ENCODE measurements at regions of chr3 and their contacts with region 1.

Region 1: DNA sequence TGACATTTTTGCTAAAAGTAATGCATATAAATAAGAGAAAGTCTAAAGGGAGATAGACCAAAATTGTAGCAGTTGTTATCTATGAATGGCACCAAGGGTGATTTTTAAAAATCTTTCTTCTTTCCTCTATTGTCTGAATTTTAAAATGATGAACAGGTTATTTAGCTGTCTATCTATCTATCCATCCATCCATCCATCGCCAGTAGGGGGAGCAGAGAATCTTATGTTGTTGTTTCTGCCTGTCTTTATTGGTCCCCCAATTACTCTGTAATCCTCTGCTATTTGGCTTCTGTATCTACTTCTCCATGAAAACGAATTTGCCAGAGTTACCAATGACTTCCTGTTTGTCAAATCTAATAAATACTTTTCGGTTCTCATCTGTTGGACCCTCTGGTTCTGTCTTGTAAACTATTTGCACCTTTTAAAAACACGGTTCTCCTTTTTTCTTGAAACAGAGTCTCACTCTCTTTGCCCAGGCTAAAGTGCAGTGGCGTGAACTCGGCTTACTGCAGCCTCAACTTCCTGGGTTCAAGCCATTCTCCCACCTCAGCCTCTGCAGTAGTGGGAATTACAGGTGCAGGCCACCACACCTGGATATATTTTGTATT is 86.0 kb downstream of the ECT2 start:
- DNase-seq: peak; percentile 23 to 76 (median 30)
- ATAC-seq: peak; percentile 89
- H3K4me3 ChIP-seq: no peak overlapping the region
- H3K27ac ChIP-seq: no peak overlapping the region
- H3K4me1 ChIP-seq: peaks cover 0 to 4% of the 10 kb centered on the region in 2 experiments; a peak in 1 of 5 replicates
- H3K27me3 ChIP-seq: no peaks in the 10 kb centered on the region
- CTCF ChIP-seq: peak; percentile 37 to 73 (median 65); a peak in 5 of 6 replicates
- EP300 ChIP-seq: no peak
- POLR2A ChIP-seq: no peak
- RAD21 ChIP-seq: peak; percentile 76 to 89

Region 2: DNA sequence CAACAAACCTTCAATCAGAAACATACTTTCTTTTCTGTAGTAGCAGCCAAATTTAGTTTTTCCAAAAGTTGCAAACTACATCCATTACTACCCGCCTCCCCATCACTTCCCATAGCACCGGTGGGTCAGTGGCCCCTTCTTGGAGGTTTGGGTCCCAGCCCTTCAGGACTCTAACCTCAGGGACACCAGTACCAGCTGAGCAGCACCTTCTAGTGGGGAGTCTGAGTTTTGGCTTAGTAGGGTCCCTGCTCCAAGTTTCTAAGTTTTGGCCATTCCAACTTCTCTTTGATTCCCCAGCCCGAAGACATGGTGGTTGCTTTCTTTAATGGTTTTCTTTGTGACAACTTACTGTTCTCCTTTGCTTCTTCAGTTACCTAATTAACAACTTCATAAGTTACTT is 74.6 kb after region 1 on chr3:
- CTCF ChIA-PET with region 1: no interaction called
- POLR2A ChIA-PET with region 1: no interaction called
- in situ Hi-C with region 1: no loop called
- intact Hi-C with region 1: loop called (anchors 5 kb)
- DNase-seq: peak in 1 of 4 experiments; percentile 13
- ATAC-seq: peak; percentile 75
- H3K4me3 ChIP-seq: no peak overlapping the region
- H3K27ac ChIP-seq: no peak overlapping the region
- H3K4me1 ChIP-seq: no peaks in the 10 kb centered on the region; a peak in 1 of 5 replicates
- H3K27me3 ChIP-seq: no peaks in the 10 kb centered on the region
- CTCF ChIP-seq: peak in 2 of 3 experiments; percentile 38 to 43; a peak in 3 of 6 replicates
- EP300 ChIP-seq: no peak
- POLR2A ChIP-seq: no peak
- RAD21 ChIP-seq: peak; percentile 23 to 63; a peak in 2 of 4 replicates

Region 3: GRCh38 chr3:173275740-173276139 is 439.2 kb after region 1 on chr3:
- CTCF ChIA-PET with region 1: no interaction called
- POLR2A ChIA-PET with region 1: no interaction called
- in situ Hi-C with region 1: no loop called
- intact Hi-C with region 1: loop called (anchors 10 kb)
- DNase-seq: peak; percentile 41 to 51 (median 45)
- ATAC-seq: peak; percentile 95
- H3K4me3 ChIP-seq: no peak overlapping the region
- H3K27ac ChIP-seq: no peak overlapping the region
- H3K4me1 ChIP-seq: no peaks in the 10 kb centered on the region
- H3K27me3 ChIP-seq: no peaks in the 10 kb centered on the region
- CTCF ChIP-seq: peak; percentile 53 to 58 (median 54); a peak in 5 of 6 replicates
- EP300 ChIP-seq: no peak
- POLR2A ChIP-seq: no peak
- RAD21 ChIP-seq: peak; percentile 75

Measured in K562 (cell line).